ENCODE measurements at regions of chr11 and their contacts with region 1.

Region 1: GRCh38 chr11:19359221-19360000 is 118.7 kb upstream of the E2F8 start:
- DNase-seq: no peak
- ATAC-seq: no peak
- H3K4me3 ChIP-seq: no peak overlapping the region
- H3K27ac ChIP-seq: no peak overlapping the region
- H3K4me1 ChIP-seq: peaks cover 0 to 15% (median 0%) of the 10 kb centered on the region in 9 donors
- H3K27me3 ChIP-seq: peaks cover 0 to 7% (median 0%) of the 10 kb centered on the region in 7 donors
- CTCF ChIP-seq: no peak

Region 2: DNA sequence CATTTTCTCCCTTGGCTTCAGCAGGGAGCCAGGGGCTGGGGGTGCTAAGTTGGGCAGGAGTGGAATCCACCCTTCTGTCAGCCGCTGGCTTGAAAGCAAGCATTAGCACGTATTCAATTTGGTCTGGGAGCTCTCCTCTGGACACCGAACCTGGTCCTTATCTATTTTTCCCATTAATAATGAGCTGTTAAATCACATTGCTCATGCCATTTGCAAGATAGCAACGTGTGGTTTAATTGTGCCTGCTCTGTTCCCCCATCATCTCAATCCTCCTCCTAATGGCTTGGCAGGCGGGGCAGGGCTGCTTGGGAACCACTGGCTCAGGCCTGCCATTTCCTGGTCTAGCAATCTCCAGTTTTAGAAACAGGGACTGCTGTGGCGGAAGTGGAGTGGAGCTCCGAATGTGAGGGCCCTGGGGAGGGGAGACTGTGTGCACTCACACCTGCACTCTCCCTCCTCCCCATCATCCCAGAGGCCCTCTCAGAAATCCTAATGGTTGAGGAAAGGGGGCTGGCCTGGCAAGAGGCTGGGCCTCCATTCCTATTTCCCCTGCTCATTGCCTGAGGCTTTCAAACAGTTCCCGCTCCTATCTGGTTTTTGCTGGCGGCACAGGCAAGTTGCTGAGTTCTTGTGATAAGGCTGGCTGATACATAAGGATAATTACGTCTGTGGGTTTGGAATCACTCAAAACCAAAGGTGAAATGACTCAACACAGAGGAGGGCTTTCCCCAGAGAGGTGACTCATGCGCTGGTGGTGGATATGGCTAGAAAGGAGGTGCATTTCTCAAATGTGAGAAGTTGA is 82.5 kb after region 1 on chr11:
- intact Hi-C with region 1: loop called in 1 of 10 experiments (anchors 5 kb)
- DNase-seq: peak; percentile 31 to 45
- ATAC-seq: peak; percentile 38 to 93 (median 82)
- H3K4me3 ChIP-seq: no peak overlapping the region
- H3K27ac ChIP-seq: peak overlapping the region in 6 of 10 donors; percentile 7 to 70 (median 52)
- H3K4me1 ChIP-seq: peaks cover 0 to 16% (median 8%) of the 10 kb centered on the region in 9 donors
- H3K27me3 ChIP-seq: no peaks in the 10 kb centered on the region
- CTCF ChIP-seq: no peak

Measured in heart right ventricle (tissue), 16 donors.